T-cell (primary cell): ENCODE measurements at regions of chr16 and their contacts with region 1.

Region 1: DNA sequence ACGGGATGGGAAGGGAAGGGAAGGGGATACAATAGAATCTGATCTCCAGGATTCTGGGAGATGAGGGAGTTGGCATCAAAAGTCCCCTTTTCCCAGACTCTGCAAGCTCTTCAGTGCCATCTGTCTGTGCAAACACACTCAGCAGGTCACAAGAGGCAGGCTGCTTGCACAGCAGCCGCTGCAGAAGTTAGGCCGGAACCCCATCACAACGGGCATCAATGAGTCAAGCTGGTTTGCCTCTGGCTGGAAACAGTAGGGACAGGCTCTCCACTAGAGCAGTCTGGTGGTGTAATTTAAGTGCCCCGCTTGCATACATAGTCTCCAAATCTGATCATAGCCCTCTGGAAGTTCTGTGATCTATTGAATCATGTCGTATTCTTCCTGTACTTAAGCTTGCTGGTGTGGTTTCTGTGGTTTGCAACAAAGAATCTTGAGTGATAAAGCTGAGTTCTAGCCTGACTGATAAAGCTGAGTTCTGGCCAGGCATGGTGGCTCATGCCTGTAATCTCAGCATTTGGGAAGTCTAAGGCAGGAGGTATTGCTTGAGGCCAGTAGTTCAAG is 33.7 kb upstream of the KDM8 start:
- DNase-seq: peak; percentile 28 to 89 (median 74)
- ATAC-seq: peak; percentile 83 to 93 (median 85)
- H3K4me3 ChIP-seq: peak overlapping the region; percentile 8 to 11
- H3K4me3 Mint-ChIP-seq: peak overlapping the region; percentile 7 to 43 (median 18)
- H3K27ac ChIP-seq: peak overlapping the region; percentile 40
- H3K27ac Mint-ChIP-seq: peak overlapping the region; percentile 45 to 88
- H3K4me1 ChIP-seq: peaks cover 31 to 65% of the 10 kb centered on the region in 2 experiments
- H3K4me1 Mint-ChIP-seq: peaks cover 72 to 78% (median 73%) of the 10 kb centered on the region in 3 donors
- H3K27me3 ChIP-seq: no peaks in the 10 kb centered on the region
- H3K27me3 Mint-ChIP-seq: no peaks in the 10 kb centered on the region

Region 2: GRCh38 chr16:26830428-26831127 is 339.0 kb before region 1 on chr16:
- CTCF ChIA-PET with region 1: no interaction called
- POLR2A ChIA-PET with region 1: no interaction called
- DNase-seq: no peak
- ATAC-seq: no peak
- H3K4me3 ChIP-seq: no peak overlapping the region
- H3K4me3 Mint-ChIP-seq: no peak overlapping the region
- H3K27ac ChIP-seq: no peak overlapping the region
- H3K27ac Mint-ChIP-seq: no peak overlapping the region
- H3K4me1 ChIP-seq: no peaks in the 10 kb centered on the region
- H3K4me1 Mint-ChIP-seq: no peaks in the 10 kb centered on the region
- H3K27me3 ChIP-seq: peaks cover 0 to 8% of the 10 kb centered on the region in 2 experiments
- H3K27me3 Mint-ChIP-seq: peaks cover 26 to 40% of the 10 kb centered on the region in 2 donors

Region 3: GRCh38 chr16:27109666-27110523 is 59.7 kb before region 1 on chr16:
- CTCF ChIA-PET with region 1: interaction called, 4 to 6 read pairs
- POLR2A ChIA-PET with region 1: interaction called in 1 of 2 experiments, 11 read pairs
- DNase-seq: peak; percentile 34 to 81 (median 68)
- ATAC-seq: peak; percentile 86 to 91 (median 90)
- H3K4me3 ChIP-seq: peak overlapping the region; percentile 30 to 45
- H3K4me3 Mint-ChIP-seq: peak overlapping the region; percentile 34 to 71 (median 59)
- H3K27ac ChIP-seq: no peak overlapping the region
- H3K27ac Mint-ChIP-seq: peak overlapping the region in 1 of 2 donors; percentile 16
- H3K4me1 ChIP-seq: peaks cover 3 to 19% of the 10 kb centered on the region in 2 experiments
- H3K4me1 Mint-ChIP-seq: peaks cover 4 to 25% (median 10%) of the 10 kb centered on the region in 3 donors
- H3K27me3 ChIP-seq: peaks cover 0 to 24% of the 10 kb centered on the region in 2 experiments
- H3K27me3 Mint-ChIP-seq: no peaks in the 10 kb centered on the region

Region 4: GRCh38 chr16:27127308-27127707 is 42.3 kb before region 1 on chr16:
- CTCF ChIA-PET with region 1: no interaction called
- POLR2A ChIA-PET with region 1: no interaction called
- DNase-seq: no peak
- ATAC-seq: no peak
- H3K4me3 ChIP-seq: no peak overlapping the region
- H3K4me3 Mint-ChIP-seq: no peak overlapping the region
- H3K27ac ChIP-seq: no peak overlapping the region
- H3K27ac Mint-ChIP-seq: no peak overlapping the region
- H3K4me1 ChIP-seq: no peaks in the 10 kb centered on the region
- H3K4me1 Mint-ChIP-seq: no peaks in the 10 kb centered on the region
- H3K27me3 ChIP-seq: peaks cover 4 to 12% of the 10 kb centered on the region in 2 experiments
- H3K27me3 Mint-ChIP-seq: peaks cover 6 to 8% of the 10 kb centered on the region in 2 donors

Region 5: GRCh38 chr16:27154705-27155521 is 14.7 kb before region 1 on chr16:
- CTCF ChIA-PET with region 1: interaction called in 1 of 2 experiments, 29 read pairs
- POLR2A ChIA-PET with region 1: interaction called in 1 of 2 experiments, 5 read pairs
- DNase-seq: peak in 34 of 35 experiments; percentile 24 to 81 (median 58)
- ATAC-seq: peak; percentile 68 to 77 (median 74)
- H3K4me3 ChIP-seq: no peak overlapping the region
- H3K4me3 Mint-ChIP-seq: no peak overlapping the region
- H3K27ac ChIP-seq: no peak overlapping the region
- H3K27ac Mint-ChIP-seq: peak overlapping the region in 1 of 2 donors; percentile 39
- H3K4me1 ChIP-seq: peaks cover 8 to 10% of the 10 kb centered on the region in 2 experiments
- H3K4me1 Mint-ChIP-seq: peaks cover 12 to 18% (median 13%) of the 10 kb centered on the region in 3 donors
- H3K27me3 ChIP-seq: no peaks in the 10 kb centered on the region
- H3K27me3 Mint-ChIP-seq: no peaks in the 10 kb centered on the region

Region 6: DNA sequence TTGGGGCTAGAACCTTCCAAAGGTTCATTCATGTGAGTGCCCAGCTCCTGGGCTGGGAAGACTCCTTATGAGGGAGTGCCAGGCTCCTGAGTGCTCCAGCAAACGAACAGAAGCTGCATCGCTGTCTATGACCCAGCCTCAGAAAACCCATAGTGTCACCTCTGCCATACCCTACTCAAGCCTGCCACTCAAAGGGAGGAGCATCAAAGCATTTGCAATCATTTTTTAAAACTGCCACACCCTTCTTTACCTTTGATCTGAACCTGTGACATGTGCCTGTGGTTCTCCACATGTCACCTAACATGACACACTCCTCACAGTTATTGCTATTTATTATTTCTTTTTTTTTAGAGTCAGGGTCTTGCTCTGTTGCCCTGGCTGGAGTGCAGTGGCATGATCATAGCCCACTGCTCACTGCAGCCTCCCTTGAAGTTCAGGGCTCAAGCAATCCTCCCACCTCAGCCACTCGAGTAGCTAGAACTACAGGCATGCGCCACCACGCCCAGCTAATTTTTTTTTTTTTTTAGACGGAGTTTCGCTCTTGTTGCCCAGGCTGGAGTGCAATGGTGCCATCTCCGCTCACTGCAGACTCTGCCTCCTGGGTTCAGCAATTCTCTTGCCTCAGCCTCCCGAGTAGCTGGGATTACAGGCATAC is 26.5 kb after region 1 on chr16:
- CTCF ChIA-PET with region 1: interaction called, 5 to 14 read pairs
- POLR2A ChIA-PET with region 1: no interaction called
- DNase-seq: peak; percentile 17 to 83 (median 52)
- ATAC-seq: peak; percentile 90 to 94 (median 92)
- H3K4me3 ChIP-seq: no peak overlapping the region
- H3K4me3 Mint-ChIP-seq: peak overlapping the region; percentile 49 to 72 (median 61)
- H3K27ac ChIP-seq: peak overlapping the region; percentile 58
- H3K27ac Mint-ChIP-seq: peak overlapping the region; percentile 98 to 99
- H3K4me1 ChIP-seq: peaks cover 37 to 61% of the 10 kb centered on the region in 2 experiments
- H3K4me1 Mint-ChIP-seq: peaks cover 71 to 84% (median 81%) of the 10 kb centered on the region in 3 donors
- H3K27me3 ChIP-seq: no peaks in the 10 kb centered on the region
- H3K27me3 Mint-ChIP-seq: no peaks in the 10 kb centered on the region

Region 7: GRCh38 chr16:27203429-27204231 is 34.0 kb after region 1 on chr16 and contains the start of gene KDM8:
- CTCF ChIA-PET with region 1: interaction called in 1 of 2 experiments, 11 read pairs
- POLR2A ChIA-PET with region 1: interaction called, 3 to 9 read pairs
- DNase-seq: peak; percentile 98 to 100 (median 100)
- ATAC-seq: peak; percentile 77 to 82 (median 82)
- H3K4me3 ChIP-seq: peak within 1 kb of the TSS; percentile 76 to 83
- H3K4me3 Mint-ChIP-seq: peak within 1 kb of the TSS; percentile 85 to 97 (median 96)
- H3K27ac ChIP-seq: peak within 1 kb of the TSS; percentile 97
- H3K27ac Mint-ChIP-seq: peak within 1 kb of the TSS; percentile 100
- H3K4me1 ChIP-seq: peaks cover 37 to 53% of the 10 kb centered on the region in 2 experiments
- H3K4me1 Mint-ChIP-seq: peaks cover 51 to 62% (median 53%) of the 10 kb centered on the region in 3 donors
- H3K27me3 ChIP-seq: no peaks in the 10 kb centered on the region
- H3K27me3 Mint-ChIP-seq: no peaks in the 10 kb centered on the region
- total RNA-seq, gene KDM8: 13.4 to 25.6 (median 23.5) TPM

Region 8: GRCh38 chr16:27304881-27305745 is 135.5 kb after region 1 on chr16:
- CTCF ChIA-PET with region 1: no interaction called
- POLR2A ChIA-PET with region 1: no interaction called
- DNase-seq: no peak
- ATAC-seq: no peak
- H3K4me3 ChIP-seq: no peak overlapping the region
- H3K4me3 Mint-ChIP-seq: no peak overlapping the region
- H3K27ac ChIP-seq: no peak overlapping the region
- H3K27ac Mint-ChIP-seq: no peak overlapping the region
- H3K4me1 ChIP-seq: no peaks in the 10 kb centered on the region
- H3K4me1 Mint-ChIP-seq: peaks cover 1 to 22% (median 12%) of the 10 kb centered on the region in 3 donors
- H3K27me3 ChIP-seq: peaks cover 0 to 7% of the 10 kb centered on the region in 2 experiments
- H3K27me3 Mint-ChIP-seq: no peaks in the 10 kb centered on the region

Region 9: GRCh38 chr16:27367461-27368357 is 198.1 kb after region 1 on chr16:
- CTCF ChIA-PET with region 1: interaction called, 3 to 13 read pairs
- POLR2A ChIA-PET with region 1: interaction called in 1 of 2 experiments, 3 read pairs
- DNase-seq: peak; percentile 62 to 97 (median 93)
- ATAC-seq: peak; percentile 77 to 85 (median 79)
- H3K4me3 ChIP-seq: peak overlapping the region; percentile 0 to 23
- H3K4me3 Mint-ChIP-seq: peak overlapping the region; percentile 51 to 66 (median 57)
- H3K27ac ChIP-seq: peak overlapping the region; percentile 100
- H3K27ac Mint-ChIP-seq: peak overlapping the region; percentile 94 to 95
- H3K4me1 ChIP-seq: peaks cover 27 to 70% of the 10 kb centered on the region in 2 experiments
- H3K4me1 Mint-ChIP-seq: peaks cover 59 to 76% (median 66%) of the 10 kb centered on the region in 3 donors
- H3K27me3 ChIP-seq: no peaks in the 10 kb centered on the region
- H3K27me3 Mint-ChIP-seq: no peaks in the 10 kb centered on the region